ENCODE measurements at regions of chr3 and their contacts with region 1.

Region 1: GRCh38 chr3:65732051-65732935 is 306.4 kb downstream of the MAGI1 start:
- DNase-seq: no peak
- H3K4me3 ChIP-seq: no peak overlapping the region
- H3K27ac ChIP-seq: no peak overlapping the region
- H3K4me1 ChIP-seq: peaks cover 0 to 25% (median 15%) of the 10 kb centered on the region in 4 donors
- H3K27me3 ChIP-seq: no peaks in the 10 kb centered on the region
- CTCF ChIP-seq: peak; percentile 75

Region 2: GRCh38 chr3:65439641-65440284 is 292.5 kb before region 1 on chr3:
- intact Hi-C with region 1: loop called (anchors 5 kb)
- DNase-seq: peak in 1 of 2 donors; percentile 69
- H3K4me3 ChIP-seq: no peak overlapping the region
- H3K27ac ChIP-seq: no peak overlapping the region
- H3K4me1 ChIP-seq: peaks cover 0 to 5% (median 0%) of the 10 kb centered on the region in 4 donors
- H3K27me3 ChIP-seq: no peaks in the 10 kb centered on the region
- CTCF ChIP-seq: peak; percentile 46 to 68

Measured in tibial artery (tissue), 4 donors.